CD14-positive monocyte (primary cell): ENCODE measurements at regions of chr3 and their contacts with region 1.

Region 1: DNA sequence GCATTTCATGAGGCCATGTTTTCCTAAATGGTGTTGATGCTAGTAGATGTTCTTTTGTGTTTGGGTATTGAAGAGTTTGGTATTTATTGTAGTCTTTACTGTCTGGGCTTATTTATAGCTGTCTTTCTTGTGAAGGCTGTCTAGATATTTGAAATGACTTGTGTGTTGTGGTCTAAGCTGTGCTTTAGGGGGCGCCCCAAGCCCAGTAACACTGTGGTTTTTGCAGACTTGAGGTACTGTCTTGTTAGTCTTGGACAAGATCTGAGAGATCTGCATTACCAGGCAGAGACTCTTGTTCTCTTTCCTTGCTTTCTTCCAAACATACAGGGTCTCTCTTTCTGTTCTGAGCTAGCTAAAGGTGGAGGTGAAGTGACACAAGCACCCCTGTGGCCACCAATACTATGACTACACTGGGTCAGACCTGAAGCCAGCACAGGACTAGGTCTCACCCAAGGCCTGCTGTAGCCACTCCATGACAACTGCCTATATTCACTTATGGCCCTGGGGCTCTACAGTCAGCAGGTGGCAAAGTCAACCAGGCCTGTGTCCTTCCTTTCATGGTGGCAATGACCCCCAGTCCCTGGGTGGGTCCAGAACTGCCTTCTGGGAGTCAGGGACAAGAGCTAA is 152.1 kb upstream of the TBC1D5 start:
- DNase-seq: peak in 1 of 3 donors; percentile 11
- H3K4me3 ChIP-seq: no peak overlapping the region
- H3K4me3 Mint-ChIP-seq: no peak overlapping the region
- H3K27ac ChIP-seq: no peak overlapping the region
- H3K27ac Mint-ChIP-seq: no peak overlapping the region
- H3K4me1 ChIP-seq: no peaks in the 10 kb centered on the region
- H3K4me1 Mint-ChIP-seq: no peaks in the 10 kb centered on the region
- H3K27me3 ChIP-seq: no peaks in the 10 kb centered on the region
- H3K27me3 Mint-ChIP-seq: peaks cover 0 to 2% (median 0%) of the 10 kb centered on the region in 3 donors
- CTCF ChIP-seq: peak; percentile 33

Region 2: DNA sequence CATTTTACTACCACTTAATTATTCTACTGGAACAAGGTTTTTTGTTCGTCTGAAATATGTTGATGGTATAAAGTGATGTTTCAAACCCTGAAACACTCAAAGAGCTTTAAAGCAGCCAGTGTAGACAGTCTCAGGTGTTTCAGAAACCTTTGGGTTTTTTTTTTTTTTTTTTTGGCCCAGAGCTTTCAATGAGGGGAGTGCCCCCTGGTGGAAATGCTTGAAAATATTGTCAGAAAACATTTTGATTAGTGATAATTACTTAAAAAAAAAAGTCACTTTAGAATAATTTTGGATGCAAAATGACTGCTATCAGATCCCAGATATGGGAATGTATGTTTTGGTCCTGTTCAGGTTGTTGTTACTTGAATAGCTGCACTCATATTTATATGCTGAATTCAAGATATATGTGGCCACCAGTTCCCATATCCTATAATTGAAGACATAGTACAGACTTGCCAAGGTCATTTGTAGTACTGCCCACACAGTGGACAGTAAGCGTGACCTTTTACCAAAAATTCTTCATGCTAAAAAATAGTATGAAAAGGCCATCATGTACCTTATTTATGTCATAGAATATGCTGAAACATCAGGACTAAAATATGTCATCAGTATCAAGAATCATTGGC is 494.7 kb after region 1 on chr3:
- intact Hi-C with region 1: loop called in 1 of 2 experiments (anchors 10 kb)
- DNase-seq: peak in 2 of 3 donors; percentile 5 to 14
- H3K4me3 ChIP-seq: no peak overlapping the region
- H3K4me3 Mint-ChIP-seq: no peak overlapping the region
- H3K27ac ChIP-seq: no peak overlapping the region
- H3K27ac Mint-ChIP-seq: no peak overlapping the region
- H3K4me1 ChIP-seq: no peaks in the 10 kb centered on the region
- H3K4me1 Mint-ChIP-seq: no peaks in the 10 kb centered on the region
- H3K27me3 ChIP-seq: no peaks in the 10 kb centered on the region
- H3K27me3 Mint-ChIP-seq: no peaks in the 10 kb centered on the region
- CTCF ChIP-seq: peak; percentile 82